ENCODE measurements at regions of chr7 and their contacts with region 1.

Region 1: GRCh38 chr7:127107601-127108007 is 145.1 kb downstream of the GRM8 start:
- DNase-seq: no peak
- H3K4me3 ChIP-seq: no peak overlapping the region
- H3K27ac ChIP-seq: no peak overlapping the region
- H3K4me1 ChIP-seq: no peaks in the 10 kb centered on the region
- H3K27me3 ChIP-seq: no peaks in the 10 kb centered on the region
- CTCF ChIP-seq: no peak
- POLR2A ChIP-seq: no peak

Region 2: GRCh38 chr7:127137146-127137545 is 29.5 kb after region 1 on chr7:
- intact Hi-C with region 1: loop called (anchors 1 kb)
- DNase-seq: no peak
- H3K4me3 ChIP-seq: no peak overlapping the region
- H3K27ac ChIP-seq: no peak overlapping the region
- H3K4me1 ChIP-seq: no peaks in the 10 kb centered on the region
- H3K27me3 ChIP-seq: no peaks in the 10 kb centered on the region
- CTCF ChIP-seq: no peak
- POLR2A ChIP-seq: no peak